T-cell (primary cell): ENCODE measurements at regions of chr2 and their contacts with region 1.

Region 1: DNA sequence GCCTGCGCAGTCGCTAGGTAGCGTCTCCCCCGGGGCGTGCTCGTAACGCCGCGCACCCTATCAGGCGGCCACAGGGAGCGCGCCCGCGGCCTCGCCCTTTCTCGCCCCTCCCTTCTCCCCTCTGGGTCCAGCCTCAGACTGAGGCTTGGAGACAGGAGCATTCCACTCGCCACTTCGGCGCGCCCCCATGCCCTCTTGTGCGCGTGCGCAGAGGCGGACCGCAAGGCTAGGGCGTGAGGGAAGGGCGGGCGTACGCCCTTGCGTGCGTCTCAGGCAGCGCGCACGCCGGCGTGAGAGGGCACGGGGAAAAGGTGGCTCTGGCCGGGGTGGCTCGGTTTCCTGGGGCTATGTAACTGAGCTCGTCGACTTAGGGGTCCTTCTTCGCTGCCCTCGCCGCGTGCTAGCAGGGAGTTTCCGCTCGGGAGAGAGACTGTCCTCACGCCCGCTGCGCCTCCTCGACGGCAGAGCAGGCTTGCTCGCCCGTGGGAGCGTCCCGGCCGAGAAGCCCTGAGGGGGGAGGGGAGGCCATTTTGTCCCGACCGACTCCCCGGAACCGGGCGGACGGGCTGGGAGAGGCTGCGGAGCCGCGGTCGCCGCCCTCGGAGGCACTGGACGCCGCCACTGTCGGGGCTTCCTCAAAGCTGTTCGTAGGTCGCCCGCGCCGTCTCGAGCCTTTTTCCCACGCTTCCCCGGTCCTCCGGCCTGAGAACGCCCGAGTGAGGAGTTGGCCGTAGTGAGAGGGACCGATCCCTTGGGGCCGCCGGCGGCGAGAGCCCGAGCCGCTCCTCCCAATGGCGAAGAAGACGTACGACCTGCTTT is at the start of gene RAB10:
- DNase-seq: peak; percentile 95 to 99 (median 98)
- ATAC-seq: peak; percentile 84 to 94 (median 89)
- H3K4me3 ChIP-seq: peak within 1 kb of the TSS; percentile 87 to 97
- H3K4me3 Mint-ChIP-seq: peak within 1 kb of the TSS; percentile 94 to 95 (median 94)
- H3K27ac ChIP-seq: peak within 1 kb of the TSS; percentile 86
- H3K27ac Mint-ChIP-seq: peak within 1 kb of the TSS; percentile 93 to 95
- H3K4me1 ChIP-seq: peaks cover 17 to 40% of the 10 kb centered on the region in 2 experiments
- H3K4me1 Mint-ChIP-seq: peaks cover 36 to 56% (median 46%) of the 10 kb centered on the region in 3 donors
- H3K27me3 ChIP-seq: no peaks in the 10 kb centered on the region
- H3K27me3 Mint-ChIP-seq: no peaks in the 10 kb centered on the region
- total RNA-seq, gene RAB10: 35.0 to 78.7 (median 71.2) TPM

Region 2: GRCh38 chr2:25991965-25992364 is 42.1 kb before region 1 on chr2:
- CTCF ChIA-PET with region 1: interaction called in 1 of 2 experiments, 13 read pairs
- POLR2A ChIA-PET with region 1: interaction called in 1 of 2 experiments, 3 read pairs
- DNase-seq: no peak
- ATAC-seq: no peak
- H3K4me3 ChIP-seq: no peak overlapping the region
- H3K4me3 Mint-ChIP-seq: peak overlapping the region in 1 of 3 donors; percentile 72
- H3K27ac ChIP-seq: no peak overlapping the region
- H3K27ac Mint-ChIP-seq: peak overlapping the region; percentile 40 to 51
- H3K4me1 ChIP-seq: peaks cover 0 to 5% of the 10 kb centered on the region in 2 experiments
- H3K4me1 Mint-ChIP-seq: peaks cover 7 to 18% (median 17%) of the 10 kb centered on the region in 3 donors
- H3K27me3 ChIP-seq: peaks cover 0 to 3% of the 10 kb centered on the region in 2 experiments
- H3K27me3 Mint-ChIP-seq: no peaks in the 10 kb centered on the region

Region 3: DNA sequence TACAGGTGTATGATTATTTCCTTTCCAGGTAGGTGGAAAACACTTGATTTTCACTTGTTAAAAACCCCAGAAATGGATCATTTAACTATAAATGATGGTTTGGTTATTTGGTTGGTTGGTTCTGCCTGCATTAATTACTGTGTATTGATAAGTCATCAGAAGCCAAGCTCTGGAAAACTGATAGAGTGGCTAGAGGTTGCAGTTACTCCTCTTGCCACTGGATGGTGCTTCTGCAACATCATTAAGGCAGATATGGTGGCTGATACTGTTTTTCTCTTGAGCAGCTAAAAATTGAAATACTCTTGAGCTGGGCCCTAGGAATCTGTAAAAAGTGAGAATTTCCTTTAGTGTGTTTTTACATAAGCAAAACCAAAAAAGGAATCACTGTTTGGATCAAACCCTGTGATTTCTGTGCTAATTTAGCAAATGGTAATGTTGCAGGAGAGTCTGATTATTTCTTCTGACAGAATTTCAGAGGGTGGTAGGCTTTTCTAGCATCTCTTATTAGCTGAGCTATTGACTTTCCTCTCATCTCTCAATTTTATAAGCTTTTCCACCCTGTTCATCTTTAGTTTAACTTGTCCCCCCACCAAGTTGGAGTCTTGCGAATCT is 54.1 kb after region 1 on chr2:
- CTCF ChIA-PET with region 1: interaction called, 4 to 11 read pairs
- POLR2A ChIA-PET with region 1: no interaction called
- DNase-seq: peak in 10 of 35 experiments; percentile 3 to 59 (median 8)
- ATAC-seq: peak in 3 of 4 experiments; percentile 55 to 71 (median 62)
- H3K4me3 ChIP-seq: no peak overlapping the region
- H3K4me3 Mint-ChIP-seq: no peak overlapping the region
- H3K27ac ChIP-seq: no peak overlapping the region
- H3K27ac Mint-ChIP-seq: no peak overlapping the region
- H3K4me1 ChIP-seq: peaks cover 0 to 4% of the 10 kb centered on the region in 2 experiments
- H3K4me1 Mint-ChIP-seq: peaks cover 55 to 65% (median 64%) of the 10 kb centered on the region in 3 donors
- H3K27me3 ChIP-seq: no peaks in the 10 kb centered on the region
- H3K27me3 Mint-ChIP-seq: no peaks in the 10 kb centered on the region